ENCODE measurements at regions of chr15 and their contacts with region 1.

Region 1: GRCh38 chr15:34065941-34066340 is 26.9 kb upstream of the AVEN start:
- DNase-seq: no peak
- ATAC-seq: no peak
- H3K4me3 ChIP-seq: no peak overlapping the region
- H3K27ac ChIP-seq: no peak overlapping the region
- H3K4me1 ChIP-seq: peaks cover 0 to 5% (median 0%) of the 10 kb centered on the region in 12 donors
- H3K27me3 ChIP-seq: no peaks in the 10 kb centered on the region
- CTCF ChIP-seq: no peak
- POLR2A ChIP-seq: no peak

Region 2: DNA sequence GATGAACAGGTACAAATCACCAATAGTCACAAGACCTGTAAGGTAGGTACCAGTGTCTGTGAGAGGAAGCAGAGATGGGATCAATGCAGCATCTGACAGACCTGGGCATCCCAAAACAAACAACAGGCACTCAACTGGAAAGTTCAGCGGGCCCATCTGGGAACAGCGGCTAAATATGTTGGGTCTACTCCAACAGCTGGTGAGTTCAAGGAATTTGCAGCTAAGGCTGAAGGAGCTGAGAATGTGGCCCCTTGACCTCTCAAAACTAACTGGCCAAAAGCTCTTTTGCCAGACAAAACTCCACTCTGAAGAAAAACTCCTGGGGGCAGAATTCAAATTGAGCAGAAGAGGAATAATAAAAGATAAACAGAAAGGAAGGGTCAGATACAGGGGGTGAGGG is 51.4 kb before region 1 on chr15:
- intact Hi-C with region 1: loop called in 1 of 10 experiments (anchors 5 kb)
- DNase-seq: no peak
- ATAC-seq: no peak
- H3K4me3 ChIP-seq: no peak overlapping the region
- H3K27ac ChIP-seq: no peak overlapping the region
- H3K4me1 ChIP-seq: peaks cover 0 to 2% (median 0%) of the 10 kb centered on the region in 12 donors
- H3K27me3 ChIP-seq: no peaks in the 10 kb centered on the region
- CTCF ChIP-seq: no peak
- POLR2A ChIP-seq: no peak

Region 3: GRCh38 chr15:34116625-34117024 is 50.7 kb after region 1 on chr15:
- intact Hi-C with region 1: loop called in 1 of 10 experiments (anchors 5 kb)
- DNase-seq: no peak
- ATAC-seq: no peak
- H3K4me3 ChIP-seq: no peak overlapping the region
- H3K27ac ChIP-seq: no peak overlapping the region
- H3K4me1 ChIP-seq: no peaks in the 10 kb centered on the region
- H3K27me3 ChIP-seq: peaks cover 0 to 25% (median 0%) of the 10 kb centered on the region in 9 donors
- CTCF ChIP-seq: no peak
- POLR2A ChIP-seq: no peak

Region 4: DNA sequence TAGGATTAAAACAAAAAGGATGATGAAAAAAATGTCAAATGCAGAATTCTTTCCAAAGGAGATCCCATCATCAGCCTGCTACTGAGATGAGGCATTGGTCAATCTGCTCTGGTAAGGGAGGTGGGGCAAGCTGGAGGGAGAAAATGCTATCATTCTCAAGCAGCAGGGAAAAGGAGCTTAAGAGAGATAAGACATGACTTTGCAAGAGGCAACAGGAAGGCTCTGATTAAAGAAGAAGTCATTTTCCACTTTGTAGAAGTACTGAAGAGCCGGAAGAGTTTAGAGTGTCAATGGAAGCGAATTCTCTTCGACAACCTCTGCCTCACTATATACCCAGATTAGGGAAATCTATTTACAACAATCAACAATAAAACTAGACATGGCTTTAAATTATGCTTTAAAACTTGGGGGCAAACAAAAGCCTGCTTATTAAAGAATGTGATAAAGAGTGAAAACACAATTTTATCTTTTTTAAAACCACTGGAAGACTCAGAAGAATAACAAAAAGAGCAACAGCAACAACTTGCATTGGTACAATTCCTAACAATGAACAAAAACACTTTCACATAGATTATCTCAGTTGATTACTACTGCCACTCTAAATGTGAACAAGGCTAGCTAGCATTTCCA is 1100.9 kb after region 1 on chr15:
- intact Hi-C with region 1: no loop called
- DNase-seq: no peak
- ATAC-seq: no peak
- H3K4me3 ChIP-seq: no peak overlapping the region
- H3K27ac ChIP-seq: no peak overlapping the region
- H3K4me1 ChIP-seq: no peaks in the 10 kb centered on the region
- H3K27me3 ChIP-seq: no peaks in the 10 kb centered on the region
- CTCF ChIP-seq: no peak
- POLR2A ChIP-seq: no peak

Measured in heart left ventricle (tissue), 16 donors.